ENCODE measurements at regions of chr6 and their contacts with region 1.

Region 1: GRCh38 chr6:36177166-36177565 is 19.4 kb upstream of the BRPF3 start:
- DNase-seq: no peak
- ATAC-seq: no peak
- H3K4me3 ChIP-seq: no peak overlapping the region
- H3K27ac ChIP-seq: no peak overlapping the region
- H3K4me1 ChIP-seq: peaks cover 7% of the 10 kb centered on the region; the same call in 1 of the 2 replicates
- H3K27me3 ChIP-seq: no peaks in the 10 kb centered on the region
- CTCF ChIP-seq: no peak
- EP300 ChIP-seq: no peak
- POLR2A ChIP-seq: no peak
- RAD21 ChIP-seq: no peak

Region 2: GRCh38 chr6:36160147-36160760 is 16.9 kb before region 1 on chr6:
- CTCF ChIA-PET with region 1: no interaction called
- POLR2A ChIA-PET with region 1: no interaction called
- in situ Hi-C with region 1: no loop called
- intact Hi-C with region 1: loop called (anchors 2 kb)
- DNase-seq: no peak
- ATAC-seq: no peak
- H3K4me3 ChIP-seq: no peak overlapping the region
- H3K27ac ChIP-seq: no peak overlapping the region
- H3K4me1 ChIP-seq: no peaks in the 10 kb centered on the region
- H3K27me3 ChIP-seq: no peaks in the 10 kb centered on the region
- CTCF ChIP-seq: no peak
- EP300 ChIP-seq: no peak
- POLR2A ChIP-seq: no peak
- RAD21 ChIP-seq: no peak

Region 3: GRCh38 chr6:36599791-36600209 is 422.6 kb after region 1 on chr6:
- CTCF ChIA-PET with region 1: no interaction called
- POLR2A ChIA-PET with region 1: no interaction called
- in situ Hi-C with region 1: no loop called
- intact Hi-C with region 1: no loop called
- DNase-seq: no peak
- ATAC-seq: peak; percentile 48
- H3K4me3 ChIP-seq: peak overlapping the region in 2 of 3 experiments; percentile 5 to 34; a peak in 1 of 6 replicates
- H3K27ac ChIP-seq: no peak overlapping the region
- H3K4me1 ChIP-seq: peaks cover 82% of the 10 kb centered on the region
- H3K27me3 ChIP-seq: no peaks in the 10 kb centered on the region; a peak in 1 of 5 replicates
- CTCF ChIP-seq: no peak
- EP300 ChIP-seq: no peak
- POLR2A ChIP-seq: peak; percentile 42 to 56
- RAD21 ChIP-seq: no peak